ENCODE measurements at regions of chr16 and their contacts with region 1.

Region 1: GRCh38 chr16:53054670-53055485 is at the start of gene CHD9:
- DNase-seq: no peak
- H3K4me3 ChIP-seq: peak within 1 kb of the TSS; percentile 66
- H3K27me3 ChIP-seq: no peaks in the 10 kb centered on the region
- CTCF ChIP-seq: peak; percentile 99
- polyA plus RNA-seq, gene CHD9: 13.1 and 30.0 TPM in 2 replicates

Region 2: DNA sequence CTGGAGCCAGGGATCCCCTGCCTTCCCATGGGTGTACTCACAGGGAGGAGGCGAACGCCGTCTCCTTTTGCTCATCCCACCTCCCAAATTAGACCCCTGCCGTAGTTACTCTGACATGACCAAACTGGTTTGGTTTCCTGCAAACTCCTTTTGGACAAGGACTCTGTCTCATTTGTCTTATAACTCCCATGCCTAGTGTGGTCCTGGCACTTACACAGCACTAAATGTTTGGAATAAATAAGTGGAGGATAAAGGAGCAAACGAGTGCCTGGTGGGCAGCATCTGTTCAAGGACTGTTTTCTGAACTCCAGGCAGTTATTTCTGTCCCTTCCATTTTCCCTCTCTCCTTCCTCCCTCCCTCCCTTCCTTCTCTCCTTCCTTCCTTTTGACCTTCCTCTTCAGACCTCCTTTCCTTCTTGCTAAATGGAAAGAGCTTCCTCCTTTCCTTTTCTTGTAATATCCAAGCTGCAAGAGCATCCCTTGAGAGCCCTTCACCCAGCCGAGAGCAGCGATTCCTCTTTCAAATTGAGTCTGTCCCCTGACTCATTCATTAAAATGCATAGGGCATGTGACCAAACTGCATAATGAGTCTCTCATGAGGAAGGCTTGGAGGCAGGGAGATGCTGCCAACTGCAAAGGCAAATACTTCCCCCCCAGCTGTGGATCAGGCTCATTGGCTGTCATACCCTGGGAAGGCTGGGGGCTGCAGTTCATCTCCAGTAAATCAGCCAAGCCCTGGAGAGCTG is 36.8 kb after region 1 on chr16:
- CTCF ChIA-PET with region 1: interaction called, 20 read pairs
- POLR2A ChIA-PET with region 1: interaction called, 4 read pairs
- DNase-seq: peak; percentile 61
- H3K4me3 ChIP-seq: no peak overlapping the region
- H3K27me3 ChIP-seq: no peaks in the 10 kb centered on the region
- CTCF ChIP-seq: no peak

Region 3: GRCh38 chr16:53130159-53131049 is 75.5 kb after region 1 on chr16:
- CTCF ChIA-PET with region 1: interaction called, 19 read pairs
- POLR2A ChIA-PET with region 1: no interaction called
- DNase-seq: peak; percentile 78
- H3K4me3 ChIP-seq: peak overlapping the region; percentile 61
- H3K27me3 ChIP-seq: no peaks in the 10 kb centered on the region
- CTCF ChIP-seq: peak; percentile 39

Region 4: DNA sequence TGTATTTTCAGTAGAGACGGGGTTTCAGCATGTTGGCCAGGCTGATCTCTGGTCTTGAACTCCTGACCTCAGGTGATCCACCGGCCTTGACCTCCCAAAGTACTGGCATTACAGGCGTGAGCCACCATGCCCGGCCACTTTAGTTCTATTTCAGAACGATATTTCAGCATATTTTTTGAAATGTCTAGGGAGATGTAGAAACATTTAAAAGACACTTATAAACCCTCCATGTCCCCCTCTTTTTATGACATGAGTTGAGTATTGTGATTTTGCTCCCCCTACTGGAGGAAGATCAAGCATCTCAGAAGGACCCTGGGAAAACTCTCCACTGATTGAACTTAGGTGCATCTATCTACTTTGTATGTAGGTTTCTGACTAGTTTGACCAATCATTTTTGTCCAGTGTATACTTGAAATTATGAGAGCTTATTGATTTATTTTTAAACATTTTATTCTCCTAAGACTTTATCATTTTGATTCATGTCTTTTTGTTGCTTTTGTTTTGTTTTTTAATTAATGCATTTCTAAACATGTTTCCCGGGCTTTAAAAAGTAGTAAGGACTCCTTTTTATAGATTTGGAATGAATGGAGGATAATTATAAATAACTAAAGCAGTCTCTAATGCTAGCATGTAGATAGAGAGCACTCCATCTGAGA is 105.0 kb after region 1 on chr16:
- CTCF ChIA-PET with region 1: interaction called, 38 read pairs
- POLR2A ChIA-PET with region 1: interaction called, 3 read pairs
- DNase-seq: no peak
- H3K4me3 ChIP-seq: no peak overlapping the region
- H3K27me3 ChIP-seq: no peaks in the 10 kb centered on the region
- CTCF ChIP-seq: peak; percentile 77

Region 5: DNA sequence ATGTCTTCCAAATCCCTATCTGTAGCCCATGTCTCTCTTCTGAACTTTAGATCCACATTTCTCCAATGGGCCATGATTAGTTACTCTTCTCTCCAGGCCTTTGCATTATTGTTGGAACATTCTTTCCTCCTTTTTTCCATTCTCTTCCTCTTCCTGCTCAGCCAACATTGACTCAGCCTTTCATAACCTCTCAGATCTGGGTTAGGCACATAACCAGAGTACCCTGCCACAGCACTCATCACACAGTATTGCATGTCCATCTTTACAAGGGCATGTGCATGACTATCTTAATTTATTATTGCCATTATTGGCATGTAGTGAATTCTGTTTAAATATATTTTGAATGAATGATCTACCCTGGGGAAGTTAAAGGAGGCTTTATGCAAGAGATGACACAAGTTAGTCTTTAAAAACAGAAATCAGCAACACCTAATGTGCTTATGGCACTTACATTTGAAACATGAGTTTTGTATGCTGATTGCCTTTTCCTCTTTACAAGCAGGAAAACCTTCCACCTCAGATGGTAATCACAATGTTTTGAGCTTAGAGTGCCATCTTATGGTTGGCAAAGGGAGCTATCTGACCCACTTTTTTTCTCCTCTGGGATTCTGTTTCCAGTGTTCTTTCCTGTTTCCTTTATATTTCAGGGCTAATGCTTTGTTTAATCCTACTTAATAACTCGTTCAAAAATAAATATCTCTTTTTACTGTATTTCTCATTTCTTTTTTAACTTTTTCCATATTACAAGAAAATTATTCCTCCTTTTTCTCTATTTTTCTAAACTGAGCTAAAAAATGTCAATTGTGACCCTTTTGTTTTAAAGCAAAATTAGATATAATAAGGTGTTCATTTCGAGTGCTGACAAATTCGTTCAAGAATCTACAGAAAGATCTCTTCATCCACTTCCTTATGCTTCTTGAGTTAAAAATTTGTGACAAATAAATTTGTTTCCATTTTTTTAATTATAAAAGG is 228.4 kb after region 1 on chr16:
- CTCF ChIA-PET with region 1: interaction called, 11 read pairs
- POLR2A ChIA-PET with region 1: no interaction called
- DNase-seq: no peak
- H3K4me3 ChIP-seq: no peak overlapping the region
- H3K27me3 ChIP-seq: no peaks in the 10 kb centered on the region
- CTCF ChIP-seq: peak; percentile 60

Measured in BJ (cell line).